Naive thymus-derived CD4-positive, alpha-beta T cell (primary cell): ENCODE measurements at regions of chr10 and their contacts with region 1.

Region 1: DNA sequence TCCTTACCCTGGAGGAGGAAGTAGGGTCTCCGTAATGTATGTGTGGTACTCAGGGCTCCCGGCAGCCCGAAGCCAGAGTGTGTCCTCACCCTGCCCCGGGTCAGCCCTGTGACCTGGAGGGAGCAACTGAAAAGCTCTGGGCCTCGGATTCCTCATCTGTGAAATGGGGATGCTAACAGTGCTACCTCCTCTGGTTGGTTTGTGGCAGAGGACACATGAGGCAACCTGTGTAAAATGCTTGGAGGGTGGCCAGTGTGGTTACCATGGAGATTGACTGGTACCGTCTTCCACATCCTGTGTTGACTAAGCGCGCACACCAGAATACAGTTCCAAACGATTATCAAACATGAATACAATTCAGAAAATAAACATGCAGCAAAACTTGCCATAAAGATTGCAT is 163.8 kb upstream of the KLF6 start:
- DNase-seq: peak; percentile 21 to 79 (median 61)
- ATAC-seq: peak; percentile 94
- H3K4me3 ChIP-seq: no peak overlapping the region
- H3K4me3 Mint-ChIP-seq: peak overlapping the region in 9 of 10 donors; percentile 16 to 67 (median 47)
- H3K27ac ChIP-seq: no peak overlapping the region
- H3K27ac Mint-ChIP-seq: peak overlapping the region; percentile 32 to 97 (median 78)
- H3K4me1 ChIP-seq: peaks cover 20 to 59% of the 10 kb centered on the region in 2 donors
- H3K4me1 Mint-ChIP-seq: peaks cover 14 to 60% (median 36%) of the 10 kb centered on the region in 7 donors
- H3K27me3 ChIP-seq: no peaks in the 10 kb centered on the region
- H3K27me3 Mint-ChIP-seq: no peaks in the 10 kb centered on the region

Region 2: DNA sequence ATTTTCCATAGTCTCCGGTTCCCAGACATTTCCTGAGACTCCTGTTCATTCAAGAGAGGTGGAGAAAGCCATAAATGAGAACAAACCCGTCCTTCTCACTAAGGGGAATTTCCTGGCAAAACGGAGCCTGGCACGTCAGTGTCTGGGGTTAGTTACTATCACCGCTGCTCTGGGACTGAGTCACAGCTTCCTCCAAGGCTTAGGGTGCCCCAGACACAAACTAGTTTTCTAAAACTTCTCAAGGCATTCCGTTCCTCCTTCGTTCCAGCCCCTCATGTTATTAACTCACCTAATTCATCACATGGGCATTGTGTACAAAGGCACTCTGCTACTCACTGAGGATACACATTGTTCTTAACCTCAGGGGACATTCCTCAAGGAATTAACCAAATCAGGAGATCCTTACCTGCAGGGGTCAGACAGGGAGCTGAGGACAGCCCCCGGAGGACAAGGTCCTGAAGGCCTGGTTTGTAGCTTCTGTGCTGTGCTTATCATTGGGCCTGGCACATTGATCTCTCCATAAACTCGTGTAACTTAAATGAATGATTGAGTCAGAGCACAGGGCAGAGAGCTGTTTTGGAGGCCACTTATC is 60.9 kb before region 1 on chr10:
- CTCF ChIA-PET with region 1: no interaction called
- POLR2A ChIA-PET with region 1: no interaction called
- intact Hi-C with region 1: loop called in 1 of 2 experiments (anchors 5 kb)
- DNase-seq: no peak
- ATAC-seq: peak; percentile 85
- H3K4me3 ChIP-seq: no peak overlapping the region
- H3K4me3 Mint-ChIP-seq: peak overlapping the region in 1 of 10 donors; percentile 62
- H3K27ac ChIP-seq: no peak overlapping the region
- H3K27ac Mint-ChIP-seq: peak overlapping the region in 1 of 9 donors; percentile 84
- H3K4me1 ChIP-seq: peaks cover 0 to 32% of the 10 kb centered on the region in 2 donors
- H3K4me1 Mint-ChIP-seq: peaks cover 4 to 43% (median 10%) of the 10 kb centered on the region in 7 donors
- H3K27me3 ChIP-seq: no peaks in the 10 kb centered on the region
- H3K27me3 Mint-ChIP-seq: peaks cover 0 to 5% (median 0%) of the 10 kb centered on the region in 5 donors

Region 3: GRCh38 chr10:3902054-3902808 is 46.6 kb before region 1 on chr10:
- CTCF ChIA-PET with region 1: no interaction called
- POLR2A ChIA-PET with region 1: no interaction called
- intact Hi-C with region 1: loop called in 1 of 2 experiments (anchors 2 kb)
- DNase-seq: no peak
- ATAC-seq: peak; percentile 86
- H3K4me3 ChIP-seq: no peak overlapping the region
- H3K4me3 Mint-ChIP-seq: peak overlapping the region in 1 of 10 donors; percentile 7
- H3K27ac ChIP-seq: no peak overlapping the region
- H3K27ac Mint-ChIP-seq: peak overlapping the region in 2 of 9 donors; percentile 2 to 79
- H3K4me1 ChIP-seq: peaks cover 0 to 16% of the 10 kb centered on the region in 2 donors
- H3K4me1 Mint-ChIP-seq: peaks cover 0 to 35% (median 4%) of the 10 kb centered on the region in 7 donors
- H3K27me3 ChIP-seq: no peaks in the 10 kb centered on the region
- H3K27me3 Mint-ChIP-seq: no peaks in the 10 kb centered on the region

Region 4: GRCh38 chr10:3961082-3961481 is 12.2 kb after region 1 on chr10:
- CTCF ChIA-PET with region 1: no interaction called
- POLR2A ChIA-PET with region 1: interaction called, 6 read pairs
- intact Hi-C with region 1: loop called (anchors 1 kb)
- DNase-seq: peak in 6 of 9 donors; percentile 32 to 55 (median 40)
- ATAC-seq: peak; percentile 92
- H3K4me3 ChIP-seq: no peak overlapping the region
- H3K4me3 Mint-ChIP-seq: peak overlapping the region in 6 of 10 donors; percentile 8 to 70 (median 28)
- H3K27ac ChIP-seq: no peak overlapping the region
- H3K27ac Mint-ChIP-seq: peak overlapping the region in 8 of 9 donors; percentile 10 to 84 (median 50)
- H3K4me1 ChIP-seq: peaks cover 12 to 33% of the 10 kb centered on the region in 2 donors
- H3K4me1 Mint-ChIP-seq: peaks cover 12 to 43% (median 18%) of the 10 kb centered on the region in 7 donors
- H3K27me3 ChIP-seq: no peaks in the 10 kb centered on the region
- H3K27me3 Mint-ChIP-seq: no peaks in the 10 kb centered on the region